Transverse colon (tissue), 4 donors: ENCODE measurements at regions of chr6 and their contacts with region 1.

Region 1: GRCh38 chr6:26571592-26572296 is 25.0 kb upstream of the ABT1 start:
- DNase-seq: peak; percentile 47
- H3K4me3 ChIP-seq: peak overlapping the region in 3 of 4 donors; percentile 38 to 49 (median 38)
- H3K27ac ChIP-seq: peak overlapping the region; percentile 52 to 55 (median 54)
- H3K4me1 ChIP-seq: peaks cover 0 to 15% (median 5%) of the 10 kb centered on the region in 4 donors
- H3K27me3 ChIP-seq: peaks cover 14% of the 10 kb centered on the region
- CTCF ChIP-seq: no peak
- EP300 ChIP-seq: no peak
- POLR2A ChIP-seq: no peak

Region 2: DNA sequence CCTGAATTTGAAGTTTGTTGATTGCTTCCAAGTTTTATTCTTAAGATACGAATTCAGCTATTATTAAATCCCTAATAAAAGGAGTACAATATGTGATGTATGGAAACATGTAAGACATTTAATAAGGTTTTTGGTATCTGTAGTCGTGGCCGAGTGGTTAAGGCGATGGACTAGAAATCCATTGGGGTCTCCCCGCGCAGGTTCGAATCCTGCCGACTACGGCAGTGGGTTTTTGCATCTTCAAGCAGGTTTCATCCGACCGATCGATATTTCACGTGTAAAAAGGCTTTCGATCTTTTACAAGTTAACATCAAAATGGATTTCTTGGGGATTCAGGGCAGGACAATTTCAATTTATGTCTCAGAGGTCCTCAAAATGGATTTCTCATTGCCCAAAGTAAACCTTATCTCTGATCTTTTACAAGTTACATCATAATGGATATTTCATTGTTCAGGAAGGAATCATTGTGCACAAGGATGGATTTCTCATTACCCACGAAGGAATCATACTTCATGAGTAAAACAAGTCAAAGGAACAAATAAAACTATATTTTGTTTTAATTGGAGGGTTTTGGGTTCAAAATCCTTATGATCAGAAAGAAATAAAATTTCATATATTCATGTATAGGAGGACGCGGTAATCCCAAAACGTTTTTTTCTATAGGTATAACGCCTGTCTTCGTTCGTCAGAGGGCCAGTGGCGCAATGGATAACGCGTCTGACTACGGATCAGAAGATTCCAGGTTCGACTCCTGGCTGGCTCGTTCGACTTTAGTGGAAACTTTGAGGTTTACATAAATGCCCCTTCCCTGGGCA is 244.1 kb before region 1 on chr6:
- in situ Hi-C with region 1: loop called in 2 of 4 experiments (anchors 10 kb)
- intact Hi-C with region 1: no loop called
- DNase-seq: peak; percentile 28
- H3K4me3 ChIP-seq: no peak overlapping the region
- H3K27ac ChIP-seq: no peak overlapping the region
- H3K4me1 ChIP-seq: peaks cover 0 to 11% (median 6%) of the 10 kb centered on the region in 4 donors
- H3K27me3 ChIP-seq: peaks cover 76% of the 10 kb centered on the region
- CTCF ChIP-seq: no peak
- EP300 ChIP-seq: no peak
- POLR2A ChIP-seq: no peak

Region 3: DNA sequence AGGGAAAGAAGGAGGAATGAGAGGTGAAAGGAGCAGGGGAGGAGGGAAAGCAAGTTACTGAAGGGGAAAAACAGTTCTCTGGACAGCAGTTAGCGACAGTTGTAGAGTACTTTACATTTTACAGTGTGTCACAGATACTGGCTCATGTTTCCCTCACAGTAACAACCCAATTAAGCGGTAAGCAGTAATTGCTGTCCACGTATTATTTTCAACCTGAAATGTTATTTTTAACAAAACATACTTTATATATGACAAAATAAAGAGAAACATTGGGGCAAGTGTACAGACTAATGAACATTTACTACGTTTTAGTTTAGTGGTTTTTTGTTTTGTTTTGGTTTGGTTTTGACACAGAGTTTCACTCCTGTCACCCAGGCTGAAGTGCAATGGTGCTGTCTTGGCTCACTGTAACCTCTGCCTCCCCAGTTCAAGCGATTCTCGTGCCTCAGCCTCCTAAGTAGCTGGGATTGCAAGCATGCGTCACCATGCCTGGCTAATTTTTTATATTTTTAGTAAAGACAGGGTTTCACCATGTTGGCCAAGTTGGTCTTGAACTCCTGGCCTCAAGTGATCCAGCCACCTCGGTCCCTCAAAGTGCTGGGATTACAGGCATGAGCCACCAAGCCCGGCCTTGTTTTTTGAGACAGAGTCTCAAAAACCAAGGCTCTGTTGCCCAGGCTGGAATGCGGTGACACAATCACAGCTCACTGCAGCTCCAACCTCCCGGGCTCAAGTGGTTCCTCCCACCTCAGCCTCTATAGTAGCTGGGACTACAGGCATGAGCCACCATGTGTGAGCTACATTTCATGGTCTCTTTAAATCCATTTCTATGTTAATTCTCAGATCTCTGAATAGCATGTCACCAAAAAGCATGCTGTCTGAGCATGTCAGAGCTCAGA is 229.4 kb before region 1 on chr6:
- in situ Hi-C with region 1: loop called in 3 of 4 experiments (anchors 10 kb)
- intact Hi-C with region 1: no loop called
- DNase-seq: no peak
- H3K4me3 ChIP-seq: peak overlapping the region in 1 of 4 donors; percentile 20
- H3K27ac ChIP-seq: peak overlapping the region in 1 of 4 donors; percentile 24
- H3K4me1 ChIP-seq: peaks cover 0 to 7% (median 0%) of the 10 kb centered on the region in 4 donors
- H3K27me3 ChIP-seq: peaks cover 6% of the 10 kb centered on the region
- CTCF ChIP-seq: no peak
- EP300 ChIP-seq: no peak
- POLR2A ChIP-seq: no peak

Region 4: DNA sequence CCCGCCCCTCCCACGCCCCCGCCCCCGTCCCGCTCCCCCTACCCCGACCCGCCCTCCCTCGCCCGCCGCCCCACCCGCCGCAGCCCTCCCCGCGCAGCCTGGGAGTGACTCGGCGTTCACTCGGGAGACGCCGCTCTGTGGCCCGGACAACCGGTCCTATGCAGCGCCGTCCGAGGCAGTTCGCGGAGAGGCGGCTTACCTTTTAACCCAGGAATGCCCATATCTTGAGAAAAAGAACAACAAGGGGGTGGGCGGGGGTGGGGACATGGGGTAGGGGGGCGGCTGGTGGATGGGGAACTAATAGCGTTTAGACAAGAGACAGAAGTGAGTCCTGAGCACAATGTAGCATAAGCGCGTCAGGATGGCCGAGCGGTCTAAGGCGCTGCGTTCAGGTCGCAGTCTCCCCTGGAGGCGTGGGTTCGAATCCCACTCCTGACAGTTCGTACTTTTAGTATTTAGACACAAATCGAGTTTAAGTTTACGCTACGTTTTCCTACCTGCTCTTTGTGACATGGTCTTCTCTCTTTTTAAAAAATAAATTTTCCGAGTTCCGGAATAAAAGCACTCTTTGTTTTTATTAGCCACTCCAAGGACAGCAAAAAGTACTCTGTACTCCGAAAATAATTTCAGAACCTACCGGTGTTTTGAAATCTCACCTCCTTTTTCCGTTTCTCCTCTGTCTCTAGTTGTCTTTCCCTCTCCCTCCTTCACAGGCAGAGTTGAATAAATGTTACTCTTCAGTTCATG is 50.7 kb before region 1 on chr6:
- in situ Hi-C with region 1: no loop called
- intact Hi-C with region 1: no loop called
- DNase-seq: peak; percentile 90
- H3K4me3 ChIP-seq: peak overlapping the region; percentile 37 to 65 (median 56)
- H3K27ac ChIP-seq: peak overlapping the region; percentile 94 to 99 (median 95)
- H3K4me1 ChIP-seq: peaks cover 0 to 16% (median 5%) of the 10 kb centered on the region in 4 donors
- H3K27me3 ChIP-seq: no peaks in the 10 kb centered on the region
- CTCF ChIP-seq: peak in 2 of 5 experiments; percentile 19 to 24
- EP300 ChIP-seq: no peak
- POLR2A ChIP-seq: peak; percentile 9

Region 5: GRCh38 chr6:27213544-27214125 is 641.9 kb after region 1 on chr6:
- in situ Hi-C with region 1: no loop called
- intact Hi-C with region 1: no loop called
- DNase-seq: no peak
- H3K4me3 ChIP-seq: no peak overlapping the region
- H3K27ac ChIP-seq: no peak overlapping the region
- H3K4me1 ChIP-seq: no peaks in the 10 kb centered on the region
- H3K27me3 ChIP-seq: peaks cover 85% of the 10 kb centered on the region
- CTCF ChIP-seq: no peak
- EP300 ChIP-seq: no peak
- POLR2A ChIP-seq: no peak